Caco-2 (cell line): ENCODE measurements at regions of chr19 and their contacts with region 1.

Region 1: GRCh38 chr19:6767357-6768235 is at the start of gene SH2D3A:
- DNase-seq: peak; percentile 95 to 96
- H3K4me3 ChIP-seq: peak within 1 kb of the TSS; percentile 80
- H3K4me3 Mint-ChIP-seq: peak within 1 kb of the TSS; percentile 80
- H3K27ac Mint-ChIP-seq: peak within 1 kb of the TSS; percentile 94
- H3K4me1 ChIP-seq: peaks cover 13% of the 10 kb centered on the region
- H3K4me1 Mint-ChIP-seq: peaks cover 10% of the 10 kb centered on the region
- H3K27me3 ChIP-seq: no peaks in the 10 kb centered on the region
- H3K27me3 Mint-ChIP-seq: no peaks in the 10 kb centered on the region
- CTCF ChIP-seq: no peak
- total RNA-seq, gene SH2D3A: 20.5 and 24.5 TPM in 2 replicates

Region 2: GRCh38 chr19:6674868-6675305 is 92.7 kb before region 1 on chr19:
- CTCF ChIA-PET with region 1: no interaction called
- POLR2A ChIA-PET with region 1: no interaction called
- intact Hi-C with region 1: no loop called
- DNase-seq: no peak
- H3K4me3 ChIP-seq: no peak overlapping the region
- H3K4me3 Mint-ChIP-seq: no peak overlapping the region
- H3K27ac Mint-ChIP-seq: no peak overlapping the region
- H3K4me1 ChIP-seq: no peaks in the 10 kb centered on the region
- H3K4me1 Mint-ChIP-seq: no peaks in the 10 kb centered on the region
- H3K27me3 ChIP-seq: no peaks in the 10 kb centered on the region
- H3K27me3 Mint-ChIP-seq: peaks cover 3% of the 10 kb centered on the region
- CTCF ChIP-seq: no peak

Region 3: DNA sequence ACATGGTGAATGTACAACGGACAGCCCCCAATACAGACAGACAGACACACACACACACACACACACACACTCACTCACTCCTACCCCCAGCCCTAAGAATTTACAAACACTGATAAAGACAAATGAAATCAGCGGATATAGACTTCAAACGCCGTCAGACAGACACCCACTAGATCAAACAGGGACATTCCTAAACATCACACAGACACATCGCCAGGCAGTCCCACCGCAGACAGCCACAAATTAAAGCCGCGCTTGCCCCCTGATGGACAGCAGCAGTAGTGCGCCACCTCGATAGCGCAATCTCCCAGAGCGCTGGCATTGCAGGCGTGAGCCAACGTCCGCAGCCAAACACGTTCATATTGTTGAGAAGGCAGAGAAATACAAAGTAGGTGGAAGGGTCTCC is 95.1 kb after region 1 on chr19:
- CTCF ChIA-PET with region 1: no interaction called
- POLR2A ChIA-PET with region 1: no interaction called
- intact Hi-C with region 1: loop called (anchors 1 kb)
- DNase-seq: peak; percentile 85 to 87
- H3K4me3 ChIP-seq: peak overlapping the region; percentile 24
- H3K4me3 Mint-ChIP-seq: peak overlapping the region; percentile 65
- H3K27ac Mint-ChIP-seq: no peak overlapping the region
- H3K4me1 ChIP-seq: no peaks in the 10 kb centered on the region
- H3K4me1 Mint-ChIP-seq: peaks cover 6% of the 10 kb centered on the region
- H3K27me3 ChIP-seq: no peaks in the 10 kb centered on the region
- H3K27me3 Mint-ChIP-seq: peaks cover 3% of the 10 kb centered on the region
- CTCF ChIP-seq: peak; percentile 82 to 88